ENCODE measurements at regions of chr10 and their contacts with region 1.

Region 1: DNA sequence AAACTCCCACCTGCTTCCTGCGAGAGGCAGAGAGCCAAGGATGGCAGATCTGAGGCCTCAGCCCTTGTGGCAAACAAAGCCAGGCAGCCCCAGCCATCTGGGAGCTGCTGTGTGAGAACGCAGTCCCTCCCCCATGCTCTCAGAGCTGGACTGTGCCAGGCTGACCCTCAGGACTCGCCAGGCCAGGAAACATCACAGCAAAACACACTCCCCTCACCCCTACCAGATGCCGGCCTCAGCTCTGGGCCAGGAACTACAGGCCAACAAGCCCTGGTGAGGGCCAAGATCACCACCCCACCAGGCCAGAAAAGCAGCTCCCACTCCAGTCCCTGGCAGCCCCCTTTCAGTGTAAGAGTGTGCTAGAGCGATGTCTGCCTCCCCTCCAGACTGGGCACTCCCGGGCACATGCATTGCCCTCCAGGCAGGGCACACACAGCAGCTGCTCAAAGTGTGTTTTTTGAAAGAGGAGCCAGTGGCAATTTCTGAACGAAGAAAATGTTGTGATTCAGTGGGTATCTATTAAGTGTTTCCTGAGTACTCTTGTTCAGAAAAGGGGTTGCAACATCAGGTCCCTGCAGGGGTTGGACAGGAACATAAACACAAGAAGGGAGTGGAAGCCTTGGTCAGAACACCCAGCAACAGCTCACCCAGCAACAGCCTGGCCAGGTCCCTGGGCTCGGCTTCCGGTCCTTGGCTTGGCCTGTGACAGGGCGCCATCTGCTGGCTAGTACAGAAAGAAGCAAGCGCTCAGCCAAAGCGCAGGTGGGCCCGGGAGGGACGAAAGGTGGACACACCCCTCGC is 18.3 kb downstream of the LRRC20 start:
- DNase-seq: peak; percentile 94
- H3K4me3 Mint-ChIP-seq: no peak overlapping the region
- H3K27ac Mint-ChIP-seq: peak overlapping the region; percentile 38
- H3K4me1 Mint-ChIP-seq: peaks cover 9% of the 10 kb centered on the region
- H3K27me3 Mint-ChIP-seq: no peaks in the 10 kb centered on the region
- CTCF ChIP-seq: peak; percentile 98

Region 2: GRCh38 chr10:70115948-70116682 is 248.1 kb before region 1 on chr10:
- CTCF ChIA-PET with region 1: interaction called, 11 read pairs
- intact Hi-C with region 1: no loop called
- DNase-seq: peak; percentile 73
- H3K4me3 Mint-ChIP-seq: no peak overlapping the region
- H3K27ac Mint-ChIP-seq: no peak overlapping the region
- H3K4me1 Mint-ChIP-seq: no peaks in the 10 kb centered on the region
- H3K27me3 Mint-ChIP-seq: no peaks in the 10 kb centered on the region
- CTCF ChIP-seq: peak; percentile 96

Region 3: DNA sequence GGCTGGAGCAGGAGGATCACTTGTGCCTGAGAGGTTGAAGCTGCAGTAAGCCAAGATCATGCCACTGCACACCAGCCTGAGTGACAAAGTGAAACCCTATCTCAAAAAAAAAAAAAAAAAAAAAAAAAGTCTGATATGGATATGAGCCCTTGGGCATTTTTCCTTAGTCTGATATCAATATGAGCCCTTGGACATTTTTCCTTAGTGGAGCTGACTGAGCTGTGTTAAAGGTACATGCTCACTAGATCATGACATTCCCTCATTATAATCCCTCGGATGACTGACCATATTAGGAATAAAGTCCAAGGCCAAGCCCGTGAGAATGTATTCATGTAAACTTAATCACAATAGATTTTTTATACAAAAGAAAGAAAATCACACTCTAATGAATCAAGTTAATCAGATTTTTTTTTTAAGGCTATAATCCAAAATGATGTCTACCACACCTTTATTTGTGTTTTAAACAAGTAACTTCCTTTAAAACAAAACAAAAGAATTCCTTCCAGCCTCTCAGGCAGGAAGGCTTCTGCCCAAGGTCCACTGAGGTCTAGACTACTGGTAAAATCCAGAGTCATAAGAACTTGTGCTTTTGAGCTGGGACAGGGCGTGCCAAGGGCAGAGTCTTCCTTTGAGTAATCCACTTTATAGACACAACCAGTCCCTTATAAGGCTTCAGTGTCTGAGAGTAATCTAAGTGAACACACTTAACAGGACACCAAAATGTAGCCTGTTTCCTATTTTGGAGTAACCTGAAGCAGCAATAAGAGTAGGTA is 136.4 kb before region 1 on chr10:
- CTCF ChIA-PET with region 1: interaction called, 145 read pairs
- intact Hi-C with region 1: loop called (anchors 1 kb)
- DNase-seq: peak; percentile 23
- H3K4me3 Mint-ChIP-seq: no peak overlapping the region
- H3K27ac Mint-ChIP-seq: no peak overlapping the region
- H3K4me1 Mint-ChIP-seq: peaks cover 40% of the 10 kb centered on the region
- H3K27me3 Mint-ChIP-seq: no peaks in the 10 kb centered on the region
- CTCF ChIP-seq: no peak

Region 4: DNA sequence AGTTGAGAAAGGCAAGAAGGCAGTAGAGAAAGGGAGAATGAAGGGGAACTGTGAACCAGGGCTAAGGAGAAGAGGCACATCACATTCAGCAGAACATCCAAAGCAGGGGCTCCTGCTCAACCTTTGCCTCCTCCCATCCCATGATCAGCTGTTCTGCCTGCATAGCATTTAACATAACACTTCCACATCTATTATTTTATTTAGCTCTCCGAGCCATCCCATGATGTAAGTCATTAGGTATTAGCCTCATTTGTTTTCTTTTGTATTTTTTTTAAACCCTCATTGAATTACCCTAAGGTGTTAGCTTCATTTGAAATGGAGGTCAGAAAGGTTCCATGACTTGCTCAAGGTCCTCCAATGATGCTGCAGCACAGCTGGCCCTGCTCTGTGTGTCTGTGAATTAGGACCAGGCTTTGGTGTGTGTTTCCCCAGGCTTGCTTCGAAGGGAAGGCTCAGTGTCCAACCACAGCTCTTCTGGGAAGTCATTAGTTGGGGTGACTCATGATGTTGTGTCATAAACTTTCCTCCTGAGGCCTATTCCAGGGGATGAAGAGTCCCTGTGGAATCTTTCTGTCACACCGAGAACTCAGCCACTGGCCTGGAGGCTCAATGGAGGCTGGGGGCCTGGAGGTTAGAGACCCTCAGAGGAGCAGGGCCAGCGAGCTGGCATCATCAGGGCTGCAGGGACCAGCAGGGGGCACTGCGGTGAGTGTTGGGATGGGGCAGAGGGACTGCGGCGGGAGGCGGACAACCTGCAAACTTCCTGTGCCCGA is 96.8 kb before region 1 on chr10:
- CTCF ChIA-PET with region 1: interaction called, 30 read pairs
- intact Hi-C with region 1: loop called (anchors 2 kb)
- DNase-seq: peak; percentile 56
- H3K4me3 Mint-ChIP-seq: no peak overlapping the region
- H3K27ac Mint-ChIP-seq: peak overlapping the region; percentile 3
- H3K4me1 Mint-ChIP-seq: peaks cover 32% of the 10 kb centered on the region
- H3K27me3 Mint-ChIP-seq: no peaks in the 10 kb centered on the region
- CTCF ChIP-seq: peak; percentile 43

Region 5: DNA sequence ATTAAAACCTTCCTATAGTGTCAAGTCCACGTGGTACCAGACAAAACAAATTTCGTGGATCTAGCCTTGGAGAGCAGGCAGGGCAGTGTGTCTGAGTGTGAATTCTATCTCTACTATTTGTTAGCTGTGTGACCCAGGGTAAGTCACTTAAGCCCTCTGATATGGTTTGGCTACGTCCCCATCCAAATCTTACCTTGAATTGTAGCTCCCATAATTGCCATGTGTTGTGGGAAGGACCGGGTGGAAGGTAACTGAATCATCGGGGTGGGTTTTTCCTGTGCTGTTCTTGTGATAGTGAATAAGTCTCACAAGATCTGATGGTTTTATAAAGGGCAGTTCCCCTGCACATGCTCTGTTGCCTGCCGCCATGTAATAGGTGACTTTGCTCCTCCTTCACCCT is 77.6 kb before region 1 on chr10:
- CTCF ChIA-PET with region 1: no interaction called
- intact Hi-C with region 1: no loop called
- DNase-seq: no peak
- H3K4me3 Mint-ChIP-seq: no peak overlapping the region
- H3K27ac Mint-ChIP-seq: no peak overlapping the region
- H3K4me1 Mint-ChIP-seq: peaks cover 17% of the 10 kb centered on the region
- H3K27me3 Mint-ChIP-seq: peaks cover 35% of the 10 kb centered on the region
- CTCF ChIP-seq: no peak

Region 6: DNA sequence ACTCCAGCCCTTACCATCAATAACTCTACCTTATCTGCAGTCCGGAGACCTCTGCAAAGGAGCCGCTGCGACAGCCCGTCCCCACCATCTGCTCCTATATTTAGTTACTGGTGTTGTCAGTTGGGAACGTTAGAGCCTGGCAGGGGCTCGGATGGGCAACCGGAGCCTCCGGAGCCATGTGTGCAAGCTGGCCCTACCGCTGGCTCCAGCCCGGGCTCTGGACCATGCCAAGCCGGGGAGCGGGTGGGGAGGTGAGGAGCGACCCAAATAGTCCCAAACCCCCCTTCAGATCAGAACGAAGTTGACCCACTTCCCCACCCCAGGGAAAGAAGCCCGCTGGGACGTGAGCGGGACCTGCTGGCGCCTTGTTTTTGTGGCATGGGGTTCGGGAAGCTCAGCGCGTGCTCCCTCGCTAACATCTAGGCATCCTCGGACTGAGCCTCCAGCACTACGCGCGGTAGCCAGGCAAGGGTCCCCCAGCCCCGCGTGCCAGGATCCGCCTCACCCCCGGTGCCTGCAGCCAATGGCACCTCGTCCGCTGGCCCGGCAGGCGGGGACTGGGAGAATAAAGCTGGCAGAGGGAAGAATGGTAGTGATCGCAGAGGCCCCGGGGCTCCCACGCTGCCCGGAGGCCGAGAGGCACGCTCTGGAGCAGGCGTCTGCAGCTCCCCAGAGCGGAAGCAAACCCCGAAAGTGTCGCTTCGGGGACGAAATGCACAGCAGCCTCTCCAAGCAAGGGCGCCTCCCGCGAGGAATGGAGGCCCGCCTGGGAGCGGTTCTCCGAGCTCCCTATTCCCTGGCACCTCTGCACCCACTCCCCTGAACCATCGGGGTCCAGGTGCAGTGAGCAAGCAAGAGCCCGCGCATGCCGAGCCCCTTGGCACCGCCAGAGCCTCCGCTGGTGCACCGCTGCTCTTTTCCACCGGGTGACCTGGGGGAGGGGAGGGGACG is 17.6 kb after region 1 on chr10:
- CTCF ChIA-PET with region 1: interaction called, 25 read pairs
- intact Hi-C with region 1: no loop called
- DNase-seq: peak; percentile 66
- H3K4me3 Mint-ChIP-seq: peak overlapping the region; percentile 85
- H3K27ac Mint-ChIP-seq: peak overlapping the region; percentile 19
- H3K4me1 Mint-ChIP-seq: peaks cover 20% of the 10 kb centered on the region
- H3K27me3 Mint-ChIP-seq: peaks cover 8% of the 10 kb centered on the region
- CTCF ChIP-seq: no peak

Measured in Calu3 (cell line).